Brain microvascular endothelial cell (primary cell): ENCODE measurements at regions of chr2 and their contacts with region 1.

Region 1: GRCh38 chr2:75466708-75467311 is 93.9 kb downstream of the EVA1A start:
- DNase-seq: peak; percentile 17
- H3K4me3 ChIP-seq: no peak overlapping the region
- H3K27ac ChIP-seq: no peak overlapping the region
- H3K27me3 ChIP-seq: no peaks in the 10 kb centered on the region
- CTCF ChIP-seq: peak; percentile 80

Region 2: DNA sequence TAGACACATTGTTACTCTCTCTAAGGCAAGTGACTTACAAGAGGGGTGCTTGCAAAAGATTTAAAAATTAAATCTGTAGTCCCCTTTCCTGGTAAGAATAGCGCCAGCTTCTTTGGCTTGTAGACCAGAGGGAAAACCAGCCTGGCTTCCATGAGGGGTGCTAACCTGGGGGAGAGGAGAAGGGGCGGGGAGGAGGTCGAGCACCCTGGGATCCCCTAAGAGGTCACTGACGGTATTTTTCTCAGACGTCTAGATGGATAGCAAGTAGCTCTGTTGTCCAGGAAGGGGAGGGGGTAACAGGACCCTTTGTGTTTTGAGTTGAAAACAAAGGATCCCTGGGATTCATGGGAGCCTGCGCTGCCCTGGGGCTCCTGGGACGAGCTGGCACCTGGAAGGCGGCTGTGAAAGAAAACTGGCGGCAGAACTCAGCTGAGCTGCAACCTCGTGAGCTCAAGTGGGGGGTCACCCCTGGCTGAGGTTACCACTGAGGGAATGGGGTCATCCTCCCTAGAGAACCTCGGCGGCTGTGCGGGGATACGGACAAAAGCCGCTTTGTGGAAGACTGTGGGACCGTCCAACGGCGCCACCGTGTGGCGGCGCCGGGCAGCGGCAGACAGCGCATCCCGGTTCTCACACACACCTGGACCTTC is 142.0 kb after region 1 on chr2:
- in situ Hi-C with region 1: loop called (anchors 25 kb)
- DNase-seq: peak; percentile 53
- H3K4me3 ChIP-seq: peak overlapping the region; percentile 45
- H3K27ac ChIP-seq: peak overlapping the region; percentile 87
- H3K27me3 ChIP-seq: no peaks in the 10 kb centered on the region
- CTCF ChIP-seq: peak; percentile 100

Region 3: GRCh38 chr2:76316691-76317090 is 849.9 kb after region 1 on chr2:
- in situ Hi-C with region 1: no loop called
- DNase-seq: no peak
- H3K4me3 ChIP-seq: no peak overlapping the region
- H3K27ac ChIP-seq: no peak overlapping the region
- H3K27me3 ChIP-seq: no peaks in the 10 kb centered on the region
- CTCF ChIP-seq: no peak